ENCODE measurements at regions of chr1 and their contacts with region 1.

Region 1: GRCh38 chr1:11784993-11785769 is 20.6 kb downstream of the MTHFR start:
- DNase-seq: peak; percentile 75 to 91
- ATAC-seq: peak; percentile 73
- H3K4me3 ChIP-seq: no peak overlapping the region
- H3K27ac ChIP-seq: no peak overlapping the region
- H3K4me1 ChIP-seq: no peaks in the 10 kb centered on the region
- H3K27me3 ChIP-seq: no peaks in the 10 kb centered on the region

Region 2: DNA sequence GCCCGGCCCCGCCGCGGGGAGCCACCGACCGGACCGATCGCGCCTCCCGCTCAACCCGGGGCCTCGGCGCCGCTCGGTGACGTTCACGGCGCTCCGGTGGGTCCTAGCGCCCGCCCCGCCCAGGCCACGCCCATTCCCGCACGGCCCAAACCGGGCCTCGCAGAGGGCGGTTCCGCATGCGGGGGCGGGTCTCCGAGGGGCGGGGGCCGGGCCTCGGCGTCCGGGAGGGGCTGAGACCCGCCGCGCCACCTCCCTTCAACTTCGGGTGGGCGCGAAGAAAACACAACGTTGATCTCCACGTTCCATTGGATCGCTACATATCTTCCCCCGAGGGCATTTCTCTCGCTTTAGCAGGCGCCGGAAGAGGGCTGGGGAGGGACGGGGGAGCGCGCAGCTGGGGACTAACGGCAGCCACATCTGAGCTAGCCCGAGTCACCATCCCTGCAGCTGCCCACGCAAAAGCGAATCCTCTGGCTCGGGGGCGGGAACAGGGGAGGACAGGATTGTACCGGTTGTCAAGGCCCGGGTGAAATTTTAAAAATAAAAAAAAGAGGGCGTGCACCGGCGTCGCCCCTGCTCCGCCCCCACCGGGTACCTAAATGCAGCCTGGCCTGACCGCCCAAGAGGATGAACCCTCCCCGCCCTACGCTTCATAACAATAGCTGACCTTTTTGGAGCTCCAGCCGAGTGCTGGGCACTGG is 104.0 kb before region 1 on chr1 and contains the start of gene MAD2L2:
- intact Hi-C with region 1: loop called in 1 of 2 experiments (anchors 5 kb)
- DNase-seq: peak; percentile 94 to 97
- ATAC-seq: peak; percentile 98
- H3K4me3 ChIP-seq: peak within 1 kb of the TSS; percentile 71 to 88
- H3K27ac ChIP-seq: peak within 1 kb of the TSS in 1 of 2 donors; percentile 22
- H3K4me1 ChIP-seq: no peaks in the 10 kb centered on the region
- H3K27me3 ChIP-seq: no peaks in the 10 kb centered on the region
- total RNA-seq, gene MAD2L2: 23.4 to 24.1 TPM

Region 3: DNA sequence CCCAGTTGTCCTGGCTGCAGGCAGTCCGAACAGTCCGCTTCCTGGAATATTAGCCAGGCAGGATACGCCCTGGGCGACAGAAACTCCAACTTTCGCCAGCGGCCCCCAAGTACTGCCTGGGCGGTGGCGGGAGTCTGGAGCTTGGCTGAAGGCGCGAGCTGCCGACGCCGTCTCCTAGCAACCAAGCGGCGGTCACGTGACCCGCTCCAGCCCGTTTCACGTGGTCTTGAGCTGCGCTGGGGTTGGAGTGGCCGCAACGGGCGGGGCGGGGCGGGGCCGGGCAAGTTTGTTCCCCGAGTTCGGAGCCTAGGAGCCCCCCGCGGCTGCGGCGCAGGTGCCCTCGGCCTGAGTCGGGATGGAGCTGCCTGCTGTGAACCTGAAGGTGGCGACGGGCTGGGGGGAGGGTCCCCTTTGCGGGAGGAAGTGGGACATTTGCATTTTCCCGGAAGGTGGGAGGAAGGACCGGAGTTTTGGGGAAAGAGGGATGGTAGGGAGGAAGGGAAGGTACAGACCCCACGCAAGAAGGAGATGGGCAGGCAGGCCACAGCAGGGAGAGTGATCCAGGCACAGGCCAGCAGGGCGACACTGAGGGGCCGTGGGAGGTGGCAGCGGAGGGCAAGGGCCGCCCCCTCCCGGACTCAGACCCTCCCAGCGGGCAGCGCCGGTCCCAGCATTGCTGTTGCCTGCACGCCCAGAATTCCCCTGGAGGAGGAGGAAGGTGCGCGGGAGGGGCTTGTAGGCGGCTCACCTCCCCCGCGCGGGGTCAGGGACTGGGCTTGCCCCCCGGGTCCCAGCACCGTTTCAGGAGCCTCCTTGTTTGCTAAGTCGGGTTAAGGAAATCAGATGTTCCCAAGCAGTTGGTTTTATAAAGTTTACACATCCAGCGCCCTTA is 49.1 kb before region 1 on chr1 and contains the start of gene AGTRAP:
- intact Hi-C with region 1: loop called in 1 of 2 experiments (anchors 5 kb)
- DNase-seq: peak; percentile 98 to 99
- ATAC-seq: peak; percentile 95
- H3K4me3 ChIP-seq: peak within 1 kb of the TSS; percentile 69
- H3K27ac ChIP-seq: peak within 1 kb of the TSS; percentile 19 to 55
- H3K4me1 ChIP-seq: no peaks in the 10 kb centered on the region
- H3K27me3 ChIP-seq: no peaks in the 10 kb centered on the region
- total RNA-seq, gene AGTRAP: 33.4 to 40.3 TPM

Region 4: GRCh38 chr1:11805447-11806306 is 20.5 kb after region 1 on chr1 and contains the starts of genes CLCN6 and MTHFR:
- intact Hi-C with region 1: loop called in 1 of 2 experiments (anchors 2 kb)
- DNase-seq: peak; percentile 100
- ATAC-seq: peak; percentile 96
- H3K4me3 ChIP-seq: peak within 1 kb of the TSS; percentile 78 to 83
- H3K27ac ChIP-seq: peak within 1 kb of the TSS; percentile 43 to 93
- H3K4me1 ChIP-seq: peaks cover 0 to 3% of the 10 kb centered on the region in 2 donors
- H3K27me3 ChIP-seq: no peaks in the 10 kb centered on the region
- total RNA-seq, gene CLCN6: 25.8 to 37.5 TPM
- total RNA-seq, gene MTHFR: 32.1 to 53.0 TPM

Region 5: GRCh38 chr1:11858968-11859871 is 74.0 kb after region 1 on chr1:
- intact Hi-C with region 1: no loop called
- DNase-seq: peak; percentile 71 to 89
- ATAC-seq: peak; percentile 58
- H3K4me3 ChIP-seq: no peak overlapping the region
- H3K27ac ChIP-seq: no peak overlapping the region
- H3K4me1 ChIP-seq: no peaks in the 10 kb centered on the region
- H3K27me3 ChIP-seq: no peaks in the 10 kb centered on the region